GM13977 (cell line): ENCODE measurements at regions of chr13 and their contacts with region 1.

Region 1: DNA sequence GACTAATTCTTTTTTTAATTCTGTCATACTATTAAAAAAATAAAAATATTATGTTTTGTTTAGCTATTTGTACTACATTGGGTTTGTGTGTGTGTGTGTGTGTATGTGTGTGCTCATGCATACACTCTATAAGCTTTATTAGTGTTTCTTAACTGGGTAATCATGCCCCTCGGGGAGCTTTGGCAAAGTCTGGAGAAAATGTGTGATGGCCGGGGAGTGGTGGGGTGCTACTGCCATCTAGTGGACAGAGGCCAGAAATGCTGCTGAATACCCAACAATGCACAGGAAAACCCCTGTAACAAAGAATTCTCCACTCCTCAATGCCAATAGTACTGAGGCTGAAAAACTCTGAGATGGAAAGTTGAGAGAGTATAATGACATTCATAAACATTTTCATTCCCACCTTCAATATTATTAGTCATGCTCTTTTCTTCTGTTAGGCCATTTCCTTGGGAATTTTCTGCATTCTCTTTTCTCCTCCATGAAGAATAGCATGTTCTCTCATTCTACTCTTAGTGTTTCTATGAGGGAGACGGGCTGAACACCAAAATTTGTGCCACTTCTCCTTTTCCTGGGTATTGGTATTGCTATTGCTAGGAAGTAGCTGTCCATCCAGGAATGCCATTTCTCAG is 157.3 kb downstream of the DNAJC3 start:
- DNase-seq: peak; percentile 51
- CTCF ChIP-seq: peak; percentile 83

Region 2: GRCh38 chr13:95536632-95537241 is 297.5 kb before region 1 on chr13:
- in situ Hi-C with region 1: loop called (anchors 25 kb)
- DNase-seq: no peak
- CTCF ChIP-seq: peak; percentile 50

Region 3: GRCh38 chr13:95624020-95624419 is 210.2 kb before region 1 on chr13:
- in situ Hi-C with region 1: loop called (anchors 25 kb)
- DNase-seq: peak; percentile 37
- CTCF ChIP-seq: peak; percentile 68